AG04450 (cell line): ENCODE measurements at regions of chr5 and their contacts with region 1.

Region 1: GRCh38 chr5:157743163-157744050 is at the start of gene LSM11:
- DNase-seq: no peak
- H3K4me3 ChIP-seq: peak within 1 kb of the TSS; percentile 76
- H3K27ac ChIP-seq: no peak within 1 kb of the TSS
- H3K27me3 ChIP-seq: no peaks in the 10 kb centered on the region
- CTCF ChIP-seq: peak; percentile 98
- polyA plus RNA-seq, gene LSM11: 1.8 and 2.5 TPM in 2 replicates

Region 2: GRCh38 chr5:157335534-157336422 is 407.6 kb before region 1 on chr5:
- CTCF ChIA-PET with region 1: interaction called, 20 read pairs
- POLR2A ChIA-PET with region 1: no interaction called
- DNase-seq: peak; percentile 44
- H3K4me3 ChIP-seq: no peak overlapping the region
- H3K27ac ChIP-seq: no peak overlapping the region
- H3K27me3 ChIP-seq: no peaks in the 10 kb centered on the region
- CTCF ChIP-seq: no peak

Region 3: DNA sequence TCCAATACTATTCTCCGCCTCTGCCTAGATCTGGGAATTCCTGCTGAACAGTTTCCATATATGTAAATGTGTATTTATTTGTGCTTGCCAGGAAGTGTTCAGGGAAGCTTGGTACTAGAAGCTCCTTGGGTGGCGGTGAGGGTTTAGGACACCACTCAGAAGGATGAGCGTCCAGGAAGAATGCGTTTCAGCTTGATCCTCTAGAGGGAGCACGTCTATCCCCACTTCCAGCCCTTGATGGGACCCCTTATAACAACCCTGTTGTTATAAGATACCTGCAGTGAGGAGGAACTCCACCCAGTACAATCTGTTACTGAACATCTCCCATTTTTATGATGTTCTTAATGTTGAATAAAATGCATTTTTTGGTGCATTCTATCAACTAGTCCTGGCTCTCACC is 388.6 kb before region 1 on chr5:
- CTCF ChIA-PET with region 1: interaction called, 20 read pairs
- POLR2A ChIA-PET with region 1: no interaction called
- DNase-seq: no peak
- H3K4me3 ChIP-seq: no peak overlapping the region
- H3K27ac ChIP-seq: no peak overlapping the region
- H3K27me3 ChIP-seq: no peaks in the 10 kb centered on the region
- CTCF ChIP-seq: peak; percentile 41

Region 4: GRCh38 chr5:157431544-157432200 is 311.7 kb before region 1 on chr5:
- CTCF ChIA-PET with region 1: interaction called, 52 read pairs
- POLR2A ChIA-PET with region 1: no interaction called
- DNase-seq: peak; percentile 24
- H3K4me3 ChIP-seq: no peak overlapping the region
- H3K27ac ChIP-seq: no peak overlapping the region
- H3K27me3 ChIP-seq: no peaks in the 10 kb centered on the region
- CTCF ChIP-seq: peak; percentile 57

Region 5: GRCh38 chr5:157511651-157512644 is 231.5 kb before region 1 on chr5:
- CTCF ChIA-PET with region 1: interaction called, 11 read pairs
- POLR2A ChIA-PET with region 1: no interaction called
- DNase-seq: peak; percentile 94
- H3K4me3 ChIP-seq: peak overlapping the region; percentile 15; the same call in 1 of the 2 replicates
- H3K27ac ChIP-seq: peak overlapping the region; percentile 96
- H3K27me3 ChIP-seq: no peaks in the 10 kb centered on the region
- CTCF ChIP-seq: no peak

Region 6: GRCh38 chr5:157731272-157732129 is 11.9 kb before region 1 on chr5 and contains the start of gene THG1L:
- CTCF ChIA-PET with region 1: interaction called, 47 read pairs
- POLR2A ChIA-PET with region 1: no interaction called
- DNase-seq: peak; percentile 95
- H3K4me3 ChIP-seq: peak within 1 kb of the TSS; percentile 77
- H3K27ac ChIP-seq: peak within 1 kb of the TSS; percentile 88
- H3K27me3 ChIP-seq: no peaks in the 10 kb centered on the region
- CTCF ChIP-seq: no peak
- polyA plus RNA-seq, gene THG1L: 18.6 and 21.0 TPM in 2 replicates

Region 7: DNA sequence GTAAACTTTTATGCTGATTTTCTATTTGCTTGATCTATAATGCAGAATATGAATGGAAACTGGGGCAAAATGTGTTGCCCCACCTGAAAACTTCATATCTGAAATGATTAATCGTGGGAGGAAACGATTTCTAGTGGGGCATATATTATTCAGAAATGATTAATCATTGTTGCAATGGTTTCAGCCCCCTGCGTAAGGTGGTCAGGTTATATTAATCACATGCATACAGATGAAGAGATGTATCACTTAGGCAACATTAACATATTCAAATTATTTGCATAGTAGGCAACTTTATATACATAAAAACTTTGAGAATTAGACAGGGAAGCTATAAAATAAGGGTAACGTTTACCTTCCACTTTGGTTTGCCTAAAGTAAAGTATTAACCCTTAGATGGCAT is 49.9 kb after region 1 on chr5:
- CTCF ChIA-PET with region 1: interaction called, 11 read pairs
- POLR2A ChIA-PET with region 1: no interaction called
- DNase-seq: no peak
- H3K4me3 ChIP-seq: no peak overlapping the region
- H3K27ac ChIP-seq: no peak overlapping the region
- H3K27me3 ChIP-seq: no peaks in the 10 kb centered on the region
- CTCF ChIP-seq: no peak

Region 8: GRCh38 chr5:157924931-157925729 is 181.7 kb after region 1 on chr5:
- CTCF ChIA-PET with region 1: no interaction called
- POLR2A ChIA-PET with region 1: no interaction called
- DNase-seq: no peak
- H3K4me3 ChIP-seq: no peak overlapping the region
- H3K27ac ChIP-seq: no peak overlapping the region
- H3K27me3 ChIP-seq: no peaks in the 10 kb centered on the region
- CTCF ChIP-seq: no peak